Panc1 (cell line): ENCODE measurements at regions of chr6 and their contacts with region 1.

Region 1: DNA sequence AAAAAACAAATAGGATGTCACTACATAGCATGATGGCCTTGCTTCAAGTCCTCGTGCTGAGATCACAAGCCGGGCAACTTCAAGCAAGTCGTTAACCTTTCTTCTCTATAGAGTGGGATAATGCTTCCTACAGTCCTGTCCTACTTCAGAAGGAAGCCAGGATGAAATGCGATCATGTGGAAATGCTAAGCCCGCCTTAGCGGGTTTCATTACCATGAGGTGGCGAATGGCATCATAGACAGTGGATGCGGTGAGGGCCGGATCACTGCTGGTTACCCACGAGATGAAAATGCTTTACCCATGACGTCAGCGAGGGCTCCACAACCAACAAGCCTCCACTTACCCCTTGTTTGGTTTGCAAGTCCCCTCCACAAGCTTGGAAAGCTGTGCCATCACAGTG is 206.4 kb downstream of the TBXT start:
- DNase-seq: no peak
- ATAC-seq: no peak
- H3K4me3 ChIP-seq: no peak overlapping the region
- H3K27ac ChIP-seq: no peak overlapping the region
- H3K4me1 ChIP-seq: no peaks in the 10 kb centered on the region
- H3K27me3 ChIP-seq: no peaks in the 10 kb centered on the region; the same call in none of the 2 replicates
- CTCF ChIP-seq: no peak

Region 2: GRCh38 chr6:164216368-164216767 is 1744.9 kb before region 1 on chr6:
- CTCF ChIA-PET with region 1: interaction called, 10 read pairs
- POLR2A ChIA-PET with region 1: no interaction called
- in situ Hi-C with region 1: no loop called
- intact Hi-C with region 1: no loop called
- DNase-seq: no peak
- ATAC-seq: no peak
- H3K4me3 ChIP-seq: no peak overlapping the region
- H3K27ac ChIP-seq: no peak overlapping the region
- H3K4me1 ChIP-seq: no peaks in the 10 kb centered on the region
- H3K27me3 ChIP-seq: no peaks in the 10 kb centered on the region
- CTCF ChIP-seq: no peak; the same call in 1 of the 2 replicates